ENCODE measurements at regions of chr15 and their contacts with region 1.

Region 1: GRCh38 chr15:88476635-88477060 is 9.1 kb downstream of the MRPS11 start:
- DNase-seq: no peak
- H3K4me3 ChIP-seq: no peak overlapping the region
- H3K27ac ChIP-seq: no peak overlapping the region
- H3K4me1 ChIP-seq: no peaks in the 10 kb centered on the region
- H3K27me3 ChIP-seq: no peaks in the 10 kb centered on the region
- CTCF ChIP-seq: peak in 4 of 6 experiments; percentile 23 to 53 (median 40)
- POLR2A ChIP-seq: no peak

Region 2: GRCh38 chr15:88299497-88299896 is 177.2 kb before region 1 on chr15:
- intact Hi-C with region 1: no loop called
- DNase-seq: no peak
- H3K4me3 ChIP-seq: no peak overlapping the region
- H3K27ac ChIP-seq: no peak overlapping the region
- H3K4me1 ChIP-seq: no peaks in the 10 kb centered on the region
- H3K27me3 ChIP-seq: peaks cover 0 to 10% (median 0%) of the 10 kb centered on the region in 4 donors
- CTCF ChIP-seq: no peak
- POLR2A ChIP-seq: no peak

Region 3: DNA sequence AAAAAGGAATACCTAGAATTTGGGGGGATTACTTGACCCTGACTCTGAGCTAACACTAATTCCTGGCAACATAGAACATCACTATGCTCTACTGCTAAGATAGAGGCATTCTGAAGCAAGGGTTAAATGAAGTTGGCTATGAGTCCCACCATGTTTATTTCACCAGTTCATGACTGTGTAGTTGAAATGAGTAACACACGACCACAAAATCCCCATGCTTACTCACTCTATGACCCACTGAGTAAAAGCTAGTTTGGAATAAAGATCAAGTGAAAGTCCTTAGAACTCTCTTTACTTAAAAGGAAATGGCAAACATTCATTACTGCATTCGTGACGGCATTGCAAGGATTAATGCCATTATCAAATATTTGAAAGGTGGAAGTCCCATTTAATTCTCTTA is 56.8 kb before region 1 on chr15:
- intact Hi-C with region 1: no loop called
- DNase-seq: no peak
- H3K4me3 ChIP-seq: no peak overlapping the region
- H3K27ac ChIP-seq: no peak overlapping the region
- H3K4me1 ChIP-seq: no peaks in the 10 kb centered on the region
- H3K27me3 ChIP-seq: peaks cover 0 to 22% (median 0%) of the 10 kb centered on the region in 4 donors
- CTCF ChIP-seq: no peak
- POLR2A ChIP-seq: no peak

Region 4: GRCh38 chr15:88610701-88611231 is 134.1 kb after region 1 on chr15:
- intact Hi-C with region 1: loop called (anchors 10 kb)
- DNase-seq: no peak
- H3K4me3 ChIP-seq: no peak overlapping the region
- H3K27ac ChIP-seq: no peak overlapping the region
- H3K4me1 ChIP-seq: peaks cover 0 to 10% (median 0%) of the 10 kb centered on the region in 3 donors
- H3K27me3 ChIP-seq: peaks cover 0 to 71% (median 7%) of the 10 kb centered on the region in 4 donors
- CTCF ChIP-seq: no peak
- POLR2A ChIP-seq: no peak